H1 (cell line): ENCODE measurements at regions of chr20 and their contacts with region 1.

Region 1: GRCh38 chr20:44720617-44720993 is 5.4 kb downstream of the CCN5 start:
- DNase-seq: no peak
- H3K4me3 ChIP-seq: no peak overlapping the region
- H3K27ac ChIP-seq: no peak overlapping the region
- H3K4me1 ChIP-seq: peaks cover 0 to 3% (median 0%) of the 10 kb centered on the region in 4 experiments; a peak in 1 of 7 replicates
- H3K27me3 ChIP-seq: no peaks in the 10 kb centered on the region
- CTCF ChIP-seq: no peak
- EP300 ChIP-seq: no peak
- POLR2A ChIP-seq: no peak
- RAD21 ChIP-seq: no peak

Region 2: GRCh38 chr20:44692932-44693476 is 27.6 kb before region 1 on chr20:
- CTCF ChIA-PET with region 1: interaction called, 83 read pairs
- POLR2A ChIA-PET with region 1: interaction called, 3 read pairs
- DNase-seq: peak in 1 of 2 experiments; percentile 38
- H3K4me3 ChIP-seq: no peak overlapping the region
- H3K27ac ChIP-seq: no peak overlapping the region
- H3K4me1 ChIP-seq: peaks cover 0 to 3% (median under 1%) of the 10 kb centered on the region in 4 experiments; a peak in 2 of 7 replicates
- H3K27me3 ChIP-seq: no peaks in the 10 kb centered on the region
- CTCF ChIP-seq: no peak
- EP300 ChIP-seq: no peak
- POLR2A ChIP-seq: no peak
- RAD21 ChIP-seq: no peak

Region 3: DNA sequence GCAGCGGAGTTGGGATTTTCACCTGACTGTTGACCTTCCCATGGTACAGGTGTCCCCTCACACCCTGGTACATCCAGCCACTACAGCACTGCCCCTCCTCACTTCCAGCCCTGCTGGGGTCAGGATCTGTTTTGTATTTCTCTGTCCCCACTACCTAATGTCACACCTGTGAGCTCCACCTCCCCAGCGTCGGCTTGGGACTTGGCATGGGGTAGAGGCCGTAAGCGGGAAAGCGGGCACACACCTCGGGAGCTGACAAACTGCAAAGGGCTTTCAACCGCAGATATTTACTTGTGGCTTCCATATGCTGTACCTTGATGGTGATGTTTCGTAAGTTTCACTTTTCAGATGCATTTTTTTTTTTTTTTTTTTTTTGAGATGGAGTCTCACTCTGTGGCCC is 10.8 kb before region 1 on chr20:
- CTCF ChIA-PET with region 1: interaction called, 180 read pairs
- POLR2A ChIA-PET with region 1: interaction called, 4 read pairs
- DNase-seq: no peak
- H3K4me3 ChIP-seq: no peak overlapping the region
- H3K27ac ChIP-seq: no peak overlapping the region
- H3K4me1 ChIP-seq: no peaks in the 10 kb centered on the region; a peak in 3 of 7 replicates
- H3K27me3 ChIP-seq: no peaks in the 10 kb centered on the region
- CTCF ChIP-seq: no peak
- EP300 ChIP-seq: no peak
- POLR2A ChIP-seq: no peak
- RAD21 ChIP-seq: no peak